ENCODE measurements at regions of chr9 and their contacts with region 1.

Region 1: DNA sequence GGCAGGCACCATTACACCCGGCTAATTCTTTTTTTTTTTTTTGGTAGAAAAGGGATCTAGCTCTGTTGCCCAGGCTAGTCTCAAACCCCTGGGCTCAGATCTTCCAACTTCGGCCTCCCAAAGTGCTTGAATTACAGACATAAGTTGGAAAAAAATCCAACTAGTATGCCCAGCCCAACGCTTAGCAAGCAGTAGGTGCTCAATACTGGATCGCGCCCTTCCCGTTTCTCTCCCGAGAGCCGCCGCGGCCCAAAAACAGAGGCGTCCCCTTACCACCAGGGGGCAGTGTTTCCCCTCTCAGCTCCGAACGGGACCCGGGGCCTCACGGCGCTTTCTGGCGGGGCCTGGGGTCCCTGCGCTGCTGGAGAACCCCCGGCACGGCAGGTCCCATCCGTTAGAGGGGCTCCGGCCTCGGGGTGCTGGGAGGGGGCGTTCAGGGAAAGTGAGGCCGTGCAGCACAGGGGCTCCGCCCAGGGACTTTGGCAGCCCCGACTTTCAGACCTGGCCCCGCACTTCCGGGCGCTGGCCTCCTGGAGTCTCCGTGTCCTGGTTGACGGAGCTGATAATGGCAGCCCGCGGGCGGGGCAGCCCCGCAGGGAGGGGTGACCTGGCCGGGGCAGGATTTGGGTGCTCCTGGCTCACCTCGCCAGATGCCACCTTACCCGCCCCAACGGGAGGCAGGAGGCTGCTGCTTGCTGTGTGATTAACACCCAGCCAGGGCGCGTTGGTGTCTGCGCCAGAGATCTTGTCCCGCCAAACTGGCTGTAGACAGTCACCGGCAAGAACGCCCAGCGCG is 15.2 kb downstream of the PTGES start:
- DNase-seq: peak; percentile 82 to 94
- ATAC-seq: peak; percentile 88 to 91 (median 89)
- H3K4me3 ChIP-seq: peak overlapping the region; percentile 52
- H3K4me3 Mint-ChIP-seq: peak overlapping the region; percentile 71
- H3K27ac ChIP-seq: peak overlapping the region; percentile 63
- H3K27ac Mint-ChIP-seq: peak overlapping the region in 1 of 2 donors; percentile 77
- H3K4me1 ChIP-seq: peaks cover 15% of the 10 kb centered on the region
- H3K4me1 Mint-ChIP-seq: peaks cover 0 to 14% of the 10 kb centered on the region in 2 donors
- H3K27me3 ChIP-seq: peaks cover 3% of the 10 kb centered on the region
- H3K27me3 Mint-ChIP-seq: peaks cover 0 to 3% of the 10 kb centered on the region in 2 donors
- CTCF ChIP-seq: peak; percentile 96

Region 2: GRCh38 chr9:129783516-129784361 is 46.1 kb after region 1 on chr9:
- intact Hi-C with region 1: loop called (anchors 1 kb)
- DNase-seq: peak; percentile 50 to 84
- ATAC-seq: peak; percentile 93 to 100 (median 99)
- H3K4me3 ChIP-seq: no peak overlapping the region
- H3K4me3 Mint-ChIP-seq: no peak overlapping the region
- H3K27ac ChIP-seq: no peak overlapping the region
- H3K27ac Mint-ChIP-seq: no peak overlapping the region
- H3K4me1 ChIP-seq: no peaks in the 10 kb centered on the region
- H3K4me1 Mint-ChIP-seq: peaks cover 0 to 6% of the 10 kb centered on the region in 2 donors
- H3K27me3 ChIP-seq: no peaks in the 10 kb centered on the region
- H3K27me3 Mint-ChIP-seq: peaks cover 23 to 27% of the 10 kb centered on the region in 2 donors
- CTCF ChIP-seq: peak; percentile 84

Region 3: DNA sequence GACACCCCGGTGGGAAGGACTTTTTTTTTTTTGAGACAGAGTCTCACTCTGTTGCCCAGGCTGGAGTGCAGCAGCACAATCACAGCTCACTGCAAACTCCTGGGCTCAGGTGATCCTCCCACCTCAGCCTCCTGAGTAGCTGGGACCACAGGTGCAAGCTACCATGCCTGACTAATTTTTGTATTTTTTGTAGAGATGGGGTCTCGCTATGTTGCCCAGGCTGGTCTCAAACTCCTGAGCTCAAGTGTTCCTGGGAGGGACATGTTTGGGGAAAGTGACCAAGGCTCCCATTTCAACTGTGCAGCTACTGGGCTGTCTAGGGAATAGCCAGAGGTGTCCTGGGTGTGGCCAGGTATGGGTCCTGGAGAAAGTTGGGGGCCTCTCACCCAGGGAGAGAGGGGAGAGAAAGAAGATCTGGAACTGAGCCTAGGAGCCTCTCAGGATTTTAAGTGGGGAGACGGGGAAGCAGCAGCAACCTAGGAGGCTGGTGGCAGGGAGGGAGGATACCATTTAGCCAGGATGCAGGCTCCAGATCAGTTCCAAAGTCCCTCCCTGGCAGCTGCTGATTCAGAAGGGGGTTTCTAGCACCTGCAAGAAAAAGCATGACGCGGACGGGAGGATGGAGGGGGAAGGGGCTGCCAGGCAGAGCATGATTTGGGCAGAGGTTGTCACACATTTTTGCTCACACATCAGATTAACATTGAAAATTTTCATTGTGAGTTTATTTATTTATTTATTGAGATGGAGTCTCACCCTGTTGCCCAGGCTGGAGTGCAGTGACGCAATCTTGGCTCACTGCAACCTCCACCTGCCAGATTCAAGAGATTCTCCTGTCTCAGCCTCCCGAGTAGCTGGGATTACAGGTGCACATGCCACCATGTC is 58.6 kb after region 1 on chr9:
- intact Hi-C with region 1: loop called (anchors 2 kb)
- DNase-seq: no peak
- ATAC-seq: no peak
- H3K4me3 ChIP-seq: no peak overlapping the region
- H3K4me3 Mint-ChIP-seq: no peak overlapping the region
- H3K27ac ChIP-seq: no peak overlapping the region
- H3K27ac Mint-ChIP-seq: no peak overlapping the region
- H3K4me1 ChIP-seq: no peaks in the 10 kb centered on the region
- H3K4me1 Mint-ChIP-seq: peaks cover 0 to 4% of the 10 kb centered on the region in 2 donors
- H3K27me3 ChIP-seq: no peaks in the 10 kb centered on the region
- H3K27me3 Mint-ChIP-seq: peaks cover 3 to 7% of the 10 kb centered on the region in 2 donors
- CTCF ChIP-seq: no peak

Region 4: DNA sequence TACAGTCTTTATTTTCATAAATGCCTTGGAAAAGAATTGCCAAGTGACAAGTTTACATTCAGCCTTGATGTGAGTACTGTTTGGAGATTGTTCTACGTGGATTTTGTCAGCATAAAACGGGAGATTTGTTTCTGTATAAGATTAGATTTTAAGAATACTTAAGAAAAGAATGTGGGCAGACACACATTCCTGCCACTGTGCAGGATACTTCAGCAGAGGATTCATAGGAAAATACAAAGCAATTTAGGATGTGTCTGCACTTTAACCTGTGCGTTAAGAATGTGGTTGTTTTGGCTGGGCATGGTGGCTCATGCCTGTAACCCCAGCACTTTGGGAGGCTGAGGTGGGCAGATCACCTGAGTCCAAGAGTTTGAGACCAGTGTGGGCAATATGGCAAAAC is 353.2 kb after region 1 on chr9:
- intact Hi-C with region 1: loop called (anchors 10 kb)
- DNase-seq: no peak
- ATAC-seq: no peak
- H3K4me3 ChIP-seq: no peak overlapping the region
- H3K4me3 Mint-ChIP-seq: no peak overlapping the region
- H3K27ac ChIP-seq: no peak overlapping the region
- H3K27ac Mint-ChIP-seq: no peak overlapping the region
- H3K4me1 ChIP-seq: peaks cover 6% of the 10 kb centered on the region
- H3K4me1 Mint-ChIP-seq: peaks cover 10 to 11% of the 10 kb centered on the region in 2 donors
- H3K27me3 ChIP-seq: no peaks in the 10 kb centered on the region
- H3K27me3 Mint-ChIP-seq: no peaks in the 10 kb centered on the region
- CTCF ChIP-seq: no peak

Measured in natural killer cell (primary cell).